Activated B cell treated with CpG ODN at 0.5 μM for 24 hours (primary cell): ENCODE measurements at regions of chr10 and their contacts with region 1.

Region 1: GRCh38 chr10:77173615-77174461 is 463.8 kb downstream of the KCNMA1 start:
- DNase-seq: peak; percentile 45
- ATAC-seq: peak; percentile 40
- H3K4me3 Mint-ChIP-seq: no peak overlapping the region
- H3K27ac Mint-ChIP-seq: no peak overlapping the region
- H3K4me1 Mint-ChIP-seq: no peaks in the 10 kb centered on the region
- H3K27me3 Mint-ChIP-seq: peaks cover 6% of the 10 kb centered on the region
- CTCF ChIP-seq: peak; percentile 89

Region 2: DNA sequence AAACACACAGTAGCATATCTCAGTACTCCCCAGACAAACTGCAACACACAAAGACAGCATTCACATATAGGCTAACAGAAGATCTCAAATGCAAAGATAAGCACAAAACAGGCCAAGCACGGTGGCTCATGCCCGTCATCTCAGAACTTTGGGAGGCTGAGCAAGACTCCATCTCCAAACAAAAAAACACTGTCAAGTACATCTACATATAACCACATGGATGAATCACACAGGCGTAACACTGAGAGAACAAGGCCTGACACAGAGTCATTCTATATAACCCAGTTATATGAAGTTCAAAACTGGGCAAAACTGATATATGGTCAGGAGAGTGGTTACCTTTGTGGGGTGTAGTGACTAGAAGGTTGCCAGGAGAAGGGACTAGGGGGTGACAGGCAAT is 42.6 kb before region 1 on chr10:
- CTCF ChIA-PET with region 1: interaction called, 4 read pairs
- POLR2A ChIA-PET with region 1: interaction called, 10 read pairs
- intact Hi-C with region 1: no loop called
- DNase-seq: no peak
- ATAC-seq: no peak
- H3K4me3 Mint-ChIP-seq: no peak overlapping the region
- H3K27ac Mint-ChIP-seq: no peak overlapping the region
- H3K4me1 Mint-ChIP-seq: no peaks in the 10 kb centered on the region
- H3K27me3 Mint-ChIP-seq: peaks cover 1% of the 10 kb centered on the region
- CTCF ChIP-seq: no peak

Region 3: GRCh38 chr10:77391605-77392235 is 217.9 kb after region 1 on chr10:
- CTCF ChIA-PET with region 1: interaction called, 3 read pairs
- POLR2A ChIA-PET with region 1: no interaction called
- intact Hi-C with region 1: loop called (anchors 1 kb)
- DNase-seq: no peak
- ATAC-seq: no peak
- H3K4me3 Mint-ChIP-seq: no peak overlapping the region
- H3K27ac Mint-ChIP-seq: no peak overlapping the region
- H3K4me1 Mint-ChIP-seq: no peaks in the 10 kb centered on the region
- H3K27me3 Mint-ChIP-seq: peaks cover 3% of the 10 kb centered on the region
- CTCF ChIP-seq: no peak